ENCODE measurements at regions of chr2 and their contacts with region 1.

Region 1: GRCh38 chr2:207334624-207335371 is 169.1 kb upstream of the KLF7 start:
- DNase-seq: peak; percentile 69
- ATAC-seq: peak; percentile 20
- H3K4me3 Mint-ChIP-seq: peak overlapping the region; percentile 48
- H3K27ac Mint-ChIP-seq: peak overlapping the region; percentile 94
- H3K4me1 Mint-ChIP-seq: peaks cover 78% of the 10 kb centered on the region
- H3K27me3 Mint-ChIP-seq: no peaks in the 10 kb centered on the region

Region 2: GRCh38 chr2:207073801-207074678 is 260.8 kb before region 1 on chr2:
- CTCF ChIA-PET with region 1: no interaction called
- POLR2A ChIA-PET with region 1: no interaction called
- intact Hi-C with region 1: loop called in 1 of 2 experiments (anchors 5 kb)
- DNase-seq: peak; percentile 61
- ATAC-seq: peak; percentile 80
- H3K4me3 Mint-ChIP-seq: peak overlapping the region; percentile 45
- H3K27ac Mint-ChIP-seq: peak overlapping the region; percentile 87
- H3K4me1 Mint-ChIP-seq: peaks cover 34% of the 10 kb centered on the region
- H3K27me3 Mint-ChIP-seq: peaks cover 5% of the 10 kb centered on the region

Region 3: DNA sequence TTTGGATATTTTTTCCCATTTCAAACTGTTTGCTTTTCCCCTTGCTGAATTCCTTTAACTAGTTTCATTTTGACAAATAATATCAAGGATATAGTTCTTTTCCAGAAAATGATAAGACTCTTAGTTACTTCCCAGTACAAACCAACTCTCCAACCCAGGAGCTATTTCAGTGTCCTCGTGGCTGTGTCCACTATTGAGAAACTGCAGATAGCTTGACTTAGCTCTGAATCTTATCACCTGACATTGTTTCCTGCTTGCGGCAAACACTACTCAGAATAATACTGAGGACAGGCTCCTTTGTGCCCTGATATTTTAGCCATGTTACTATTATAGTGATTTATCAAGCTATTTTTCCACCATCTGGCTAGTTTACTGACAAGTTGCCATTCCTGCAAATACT is 243.6 kb before region 1 on chr2:
- CTCF ChIA-PET with region 1: no interaction called
- POLR2A ChIA-PET with region 1: no interaction called
- intact Hi-C with region 1: no loop called
- DNase-seq: no peak
- ATAC-seq: no peak
- H3K4me3 Mint-ChIP-seq: no peak overlapping the region
- H3K27ac Mint-ChIP-seq: no peak overlapping the region
- H3K4me1 Mint-ChIP-seq: peaks cover 38% of the 10 kb centered on the region
- H3K27me3 Mint-ChIP-seq: no peaks in the 10 kb centered on the region

Region 4: GRCh38 chr2:207230261-207231105 is 104.3 kb before region 1 on chr2:
- CTCF ChIA-PET with region 1: interaction called, 3 read pairs
- POLR2A ChIA-PET with region 1: interaction called, 3 read pairs
- intact Hi-C with region 1: loop called (anchors 2 to 5 kb)
- DNase-seq: no peak
- ATAC-seq: peak; percentile 54
- H3K4me3 Mint-ChIP-seq: no peak overlapping the region
- H3K27ac Mint-ChIP-seq: peak overlapping the region; percentile 79
- H3K4me1 Mint-ChIP-seq: peaks cover 46% of the 10 kb centered on the region
- H3K27me3 Mint-ChIP-seq: no peaks in the 10 kb centered on the region

Region 5: GRCh38 chr2:207279520-207279919 is 55.3 kb before region 1 on chr2:
- CTCF ChIA-PET with region 1: no interaction called
- POLR2A ChIA-PET with region 1: interaction called, 3 read pairs
- intact Hi-C with region 1: loop called in 1 of 2 experiments (anchors 2 kb)
- DNase-seq: peak; percentile 32
- ATAC-seq: peak; percentile 87
- H3K4me3 Mint-ChIP-seq: no peak overlapping the region
- H3K27ac Mint-ChIP-seq: peak overlapping the region; percentile 63
- H3K4me1 Mint-ChIP-seq: peaks cover 42% of the 10 kb centered on the region
- H3K27me3 Mint-ChIP-seq: no peaks in the 10 kb centered on the region

Region 6: GRCh38 chr2:207311316-207312005 is 23.3 kb before region 1 on chr2:
- CTCF ChIA-PET with region 1: interaction called, 3 read pairs
- POLR2A ChIA-PET with region 1: no interaction called
- intact Hi-C with region 1: loop called (anchors 1 kb)
- DNase-seq: peak; percentile 74
- ATAC-seq: peak; percentile 97
- H3K4me3 Mint-ChIP-seq: peak overlapping the region; percentile 13
- H3K27ac Mint-ChIP-seq: peak overlapping the region; percentile 96
- H3K4me1 Mint-ChIP-seq: peaks cover 32% of the 10 kb centered on the region
- H3K27me3 Mint-ChIP-seq: no peaks in the 10 kb centered on the region

Region 7: GRCh38 chr2:207375192-207375861 is 40.5 kb after region 1 on chr2:
- CTCF ChIA-PET with region 1: no interaction called
- POLR2A ChIA-PET with region 1: no interaction called
- intact Hi-C with region 1: no loop called
- DNase-seq: no peak
- ATAC-seq: no peak
- H3K4me3 Mint-ChIP-seq: no peak overlapping the region
- H3K27ac Mint-ChIP-seq: no peak overlapping the region
- H3K4me1 Mint-ChIP-seq: no peaks in the 10 kb centered on the region
- H3K27me3 Mint-ChIP-seq: no peaks in the 10 kb centered on the region

Region 8: GRCh38 chr2:207394812-207395534 is 60.2 kb after region 1 on chr2:
- CTCF ChIA-PET with region 1: interaction called, 3 read pairs
- POLR2A ChIA-PET with region 1: no interaction called
- intact Hi-C with region 1: loop called in 1 of 2 experiments (anchors 2 kb)
- DNase-seq: peak; percentile 81
- ATAC-seq: peak; percentile 98
- H3K4me3 Mint-ChIP-seq: no peak overlapping the region
- H3K27ac Mint-ChIP-seq: peak overlapping the region; percentile 77
- H3K4me1 Mint-ChIP-seq: peaks cover 14% of the 10 kb centered on the region
- H3K27me3 Mint-ChIP-seq: no peaks in the 10 kb centered on the region